ENCODE measurements at regions of chr7 and their contacts with region 1.

Region 1: DNA sequence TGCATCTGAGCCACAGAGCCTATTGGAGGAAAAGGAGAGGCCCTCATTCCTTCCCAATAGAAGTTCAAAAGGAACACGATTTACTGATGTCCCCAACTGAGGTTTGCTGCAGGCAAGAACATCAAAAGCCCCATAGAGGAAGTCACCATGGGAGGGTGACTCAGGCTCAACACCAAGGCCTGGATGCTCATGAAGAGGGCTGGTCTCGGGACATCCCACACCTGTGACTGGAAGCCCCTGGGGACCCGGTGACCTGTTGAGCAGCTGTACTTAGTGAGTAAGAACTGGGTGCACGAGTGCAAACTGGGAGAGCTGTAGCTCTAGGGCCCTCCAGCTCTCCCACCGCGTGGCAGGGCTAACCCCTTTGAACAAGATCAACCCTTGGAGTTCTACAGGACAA is 38.0 kb downstream of the CYTH3 start:
- DNase-seq: peak; percentile 63
- CTCF ChIP-seq: no peak

Region 2: DNA sequence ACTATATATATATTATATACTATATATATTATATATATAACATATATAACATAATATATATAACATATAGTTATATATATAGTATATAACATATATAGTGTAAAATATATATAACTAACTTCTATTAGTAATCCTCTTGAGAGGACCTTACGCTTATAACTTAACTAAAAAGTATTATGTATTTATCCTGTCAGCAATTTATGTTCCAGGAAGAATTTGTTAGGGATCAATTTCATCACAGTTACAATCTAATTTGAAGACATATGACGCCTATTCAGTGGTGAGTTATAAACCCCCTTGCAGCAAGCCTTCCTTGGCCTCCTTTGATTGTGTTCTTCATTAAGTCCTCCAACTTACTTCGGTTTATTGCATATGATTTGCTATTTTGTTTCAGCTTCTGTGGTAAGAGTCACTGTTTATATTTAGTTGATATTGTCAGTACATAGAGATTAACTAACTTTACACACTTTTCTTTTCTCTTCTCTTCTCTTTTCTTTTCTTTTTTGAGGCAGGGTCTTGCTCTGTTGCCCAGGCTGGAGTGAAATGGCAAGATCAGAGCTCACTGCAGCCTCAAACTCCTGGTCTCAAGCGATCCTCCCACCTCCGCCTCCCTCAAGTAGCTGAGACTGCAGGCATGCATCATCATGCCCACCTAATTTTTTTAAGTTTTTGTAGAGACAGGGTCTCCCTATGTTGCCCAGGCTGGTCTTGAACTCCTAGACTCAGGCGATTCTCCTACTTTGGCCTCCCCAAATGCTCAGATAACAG is 143.5 kb before region 1 on chr7:
- CTCF ChIA-PET with region 1: no interaction called
- POLR2A ChIA-PET with region 1: no interaction called
- DNase-seq: no peak
- CTCF ChIP-seq: no peak

Region 3: DNA sequence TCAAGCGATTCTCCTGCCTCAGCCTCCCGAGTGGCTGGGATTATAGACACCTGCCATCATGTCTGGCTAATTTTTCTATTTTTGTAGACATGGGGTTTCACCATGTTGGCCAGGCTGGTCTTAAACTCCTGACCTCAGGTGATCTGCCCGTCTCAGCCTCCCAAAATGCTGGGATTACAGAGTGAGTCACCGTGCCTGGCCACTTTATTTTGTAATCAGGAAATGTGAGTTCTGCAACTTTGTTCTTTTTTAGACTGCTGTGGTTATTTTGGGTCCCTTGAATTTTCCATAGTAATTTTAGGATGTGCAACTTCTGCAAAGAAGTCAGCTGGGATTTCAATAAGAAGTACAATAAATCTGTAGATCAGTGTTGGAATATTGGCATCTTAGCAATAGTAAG is 58.7 kb before region 1 on chr7:
- CTCF ChIA-PET with region 1: no interaction called
- POLR2A ChIA-PET with region 1: no interaction called
- DNase-seq: no peak
- CTCF ChIP-seq: no peak

Region 4: DNA sequence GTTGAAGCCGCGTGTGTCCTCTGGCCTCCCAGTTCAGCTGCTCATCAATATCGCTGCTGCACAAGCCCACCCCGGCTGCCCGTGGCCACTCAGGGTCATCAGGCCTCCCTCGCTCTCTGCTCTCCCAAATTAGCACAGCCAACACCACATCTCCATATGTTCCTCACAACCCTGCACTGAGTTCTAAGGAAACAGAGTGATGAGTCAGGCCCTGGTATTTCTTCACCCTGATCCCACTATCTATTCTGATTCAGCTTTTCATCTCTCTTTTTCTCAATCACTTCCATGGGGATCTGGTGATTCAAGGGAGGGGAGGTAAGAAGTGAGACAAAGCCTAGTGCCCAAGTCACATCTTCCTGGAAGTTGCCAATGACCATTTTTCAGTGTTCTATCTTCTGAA is 14.2 kb after region 1 on chr7:
- CTCF ChIA-PET with region 1: interaction called, 17 read pairs
- POLR2A ChIA-PET with region 1: interaction called, 3 read pairs
- DNase-seq: no peak
- CTCF ChIP-seq: no peak